ENCODE measurements at regions of chr6 and their contacts with region 1.

Region 1: DNA sequence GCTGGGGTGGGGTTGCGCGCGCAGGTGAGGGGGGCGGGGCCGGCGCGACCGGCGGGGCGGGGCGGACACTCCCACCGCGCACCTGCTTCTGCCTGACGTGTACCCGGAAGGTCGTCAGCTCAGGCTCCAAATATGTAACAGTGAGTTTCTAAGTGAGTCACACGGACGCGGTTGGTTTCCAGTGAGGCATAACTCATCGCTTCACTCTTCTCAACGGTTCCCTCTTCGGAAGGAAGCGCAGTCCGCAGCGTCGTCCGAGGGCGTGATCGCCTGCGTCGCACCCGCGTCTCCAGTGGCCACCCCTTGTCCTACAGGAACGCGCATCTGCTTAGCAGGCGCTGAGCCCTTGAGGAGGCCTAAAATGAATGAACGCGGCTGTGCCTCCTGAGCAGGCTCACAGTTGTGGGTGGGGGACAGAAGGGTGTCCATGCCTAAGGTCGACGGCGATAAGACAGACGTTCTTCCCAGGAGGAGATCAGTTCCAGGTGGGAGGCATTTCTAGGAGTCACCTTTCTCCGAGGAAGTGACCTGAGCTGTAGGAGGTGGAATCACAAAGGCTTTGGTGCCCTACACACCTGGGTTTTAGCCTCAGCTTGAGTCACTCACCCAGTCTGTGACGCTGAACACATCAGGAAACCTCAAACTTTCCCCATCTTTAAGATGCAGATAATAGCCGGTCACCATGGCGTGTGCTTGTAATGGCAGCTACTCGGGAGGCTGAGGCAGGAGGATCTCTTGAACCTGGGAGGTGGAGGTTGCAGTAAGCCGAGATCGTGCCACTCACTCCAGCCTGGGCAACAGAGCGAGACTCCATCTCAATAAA is 50.9 kb upstream of the EZR start:
- DNase-seq: peak; percentile 98
- ATAC-seq: peak; percentile 91
- H3K4me3 ChIP-seq: peak overlapping the region; percentile 62
- H3K27ac ChIP-seq: peak overlapping the region; percentile 91
- H3K4me1 ChIP-seq: peaks cover 39% of the 10 kb centered on the region
- H3K27me3 ChIP-seq: no peaks in the 10 kb centered on the region
- CTCF ChIP-seq: peak; percentile 10 to 43 (median 34); a peak in 4 of 6 replicates
- EP300 ChIP-seq: peak; percentile 96 to 97; a peak in 3 of 4 replicates
- POLR2A ChIP-seq: peak; percentile 98
- RAD21 ChIP-seq: peak; percentile 38

Region 2: GRCh38 chr6:158649289-158650143 is 220.5 kb before region 1 on chr6 and contains the start of gene SYTL3:
- CTCF ChIA-PET with region 1: interaction called, 3 read pairs
- POLR2A ChIA-PET with region 1: no interaction called
- RAD21 ChIA-PET with region 1: interaction called, 4 read pairs
- SMC1A ChIA-PET with region 1: interaction called, 4 read pairs
- in situ Hi-C with region 1: no loop called
- intact Hi-C with region 1: loop called (anchors 2 kb)
- DNase-seq: peak; percentile 95
- ATAC-seq: peak; percentile 71
- H3K4me3 ChIP-seq: peak within 1 kb of the TSS; percentile 45; the same call in 1 of the 2 replicates
- H3K27ac ChIP-seq: peak within 1 kb of the TSS; percentile 76
- H3K4me1 ChIP-seq: peaks cover 43% of the 10 kb centered on the region
- H3K27me3 ChIP-seq: no peaks in the 10 kb centered on the region
- CTCF ChIP-seq: no peak
- EP300 ChIP-seq: peak; percentile 31 to 85; a peak in 3 of 4 replicates
- POLR2A ChIP-seq: peak; percentile 55
- RAD21 ChIP-seq: no peak
- polyA plus RNA-seq, gene SYTL3: 3.3 to 4.2 TPM

Region 3: GRCh38 chr6:158793432-158793831 is 76.6 kb before region 1 on chr6:
- CTCF ChIA-PET with region 1: interaction called, 10 read pairs
- POLR2A ChIA-PET with region 1: interaction called, 6 read pairs
- RAD21 ChIA-PET with region 1: interaction called, 8 read pairs
- SMC1A ChIA-PET with region 1: interaction called, 9 read pairs
- in situ Hi-C with region 1: no loop called
- intact Hi-C with region 1: loop called (anchors 5 kb)
- DNase-seq: no peak
- ATAC-seq: peak; percentile 74
- H3K4me3 ChIP-seq: 0 out of 2 replicates have a peak overlapping the region, but pooled peaks have one; percentile 36
- H3K27ac ChIP-seq: no peak overlapping the region
- H3K4me1 ChIP-seq: peaks cover 65% of the 10 kb centered on the region
- H3K27me3 ChIP-seq: no peaks in the 10 kb centered on the region
- CTCF ChIP-seq: peak; percentile 62 to 69 (median 68)
- EP300 ChIP-seq: no peak
- POLR2A ChIP-seq: no peak
- RAD21 ChIP-seq: peak; percentile 82

Region 4: GRCh38 chr6:158819213-158819909 is 50.7 kb before region 1 on chr6 and contains the start of gene EZR:
- CTCF ChIA-PET with region 1: interaction called, 17 read pairs
- POLR2A ChIA-PET with region 1: interaction called, 11 read pairs
- RAD21 ChIA-PET with region 1: interaction called, 21 read pairs
- SMC1A ChIA-PET with region 1: interaction called, 52 read pairs
- in situ Hi-C with region 1: no loop called
- intact Hi-C with region 1: loop called (anchors 1 kb)
- DNase-seq: no peak
- ATAC-seq: peak; percentile 66
- H3K4me3 ChIP-seq: peak within 1 kb of the TSS; percentile 82
- H3K27ac ChIP-seq: peak within 1 kb of the TSS; percentile 66
- H3K4me1 ChIP-seq: peaks cover 14% of the 10 kb centered on the region
- H3K27me3 ChIP-seq: no peaks in the 10 kb centered on the region
- CTCF ChIP-seq: no peak; a peak in 1 of 6 replicates
- EP300 ChIP-seq: no peak
- POLR2A ChIP-seq: peak; percentile 93
- RAD21 ChIP-seq: 0 out of 2 replicates have a peak, but pooled peaks have one; percentile 8
- polyA plus RNA-seq, gene EZR: 79.1 to 98.6 TPM

Region 5: DNA sequence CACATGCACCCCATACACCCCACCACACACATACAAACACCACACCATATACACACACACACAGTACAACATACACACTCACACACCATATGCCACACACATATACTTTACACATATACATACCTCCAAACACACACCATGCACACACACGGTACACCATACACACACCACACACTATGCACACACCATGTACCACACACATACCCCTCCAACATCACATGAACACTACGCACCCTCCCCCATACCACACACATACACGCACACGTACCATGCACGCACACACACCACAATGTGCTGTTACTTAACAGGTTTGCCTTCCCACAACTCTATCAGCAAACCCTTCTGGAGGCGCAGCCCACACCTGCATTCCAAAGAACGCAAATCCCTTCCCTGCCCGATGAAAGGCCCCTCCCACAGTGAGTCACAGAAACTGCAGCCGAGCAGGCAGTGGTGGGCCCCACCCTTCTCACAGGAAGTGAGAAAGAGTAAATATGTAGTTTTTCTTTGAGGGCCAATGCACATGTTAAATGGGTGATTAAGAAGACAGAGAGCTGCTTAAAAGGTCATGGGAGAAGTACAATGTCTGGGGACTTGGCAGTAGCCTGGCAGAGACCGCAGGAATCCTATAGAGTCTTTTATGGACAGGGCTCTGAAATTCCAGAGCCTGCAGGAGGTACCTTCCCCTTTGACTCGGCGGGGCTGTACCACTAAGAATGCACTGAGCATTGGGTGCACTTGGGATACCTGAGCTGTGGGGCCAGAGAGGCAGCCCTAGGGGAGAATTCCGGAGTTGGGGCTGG is 16.8 kb before region 1 on chr6:
- CTCF ChIA-PET with region 1: interaction called, 13 read pairs
- POLR2A ChIA-PET with region 1: interaction called, 19 read pairs
- RAD21 ChIA-PET with region 1: interaction called, 21 read pairs
- SMC1A ChIA-PET with region 1: interaction called, 39 read pairs
- in situ Hi-C with region 1: no loop called
- intact Hi-C with region 1: no loop called
- DNase-seq: peak; percentile 50
- ATAC-seq: peak; percentile 94
- H3K4me3 ChIP-seq: peak overlapping the region; percentile 1; the same call in 1 of the 2 replicates
- H3K27ac ChIP-seq: peak overlapping the region; percentile 54
- H3K4me1 ChIP-seq: peaks cover 34% of the 10 kb centered on the region
- H3K27me3 ChIP-seq: no peaks in the 10 kb centered on the region
- CTCF ChIP-seq: no peak
- EP300 ChIP-seq: peak in 1 of 2 experiments; percentile 34; a peak in 1 of 4 replicates
- POLR2A ChIP-seq: no peak
- RAD21 ChIP-seq: peak; percentile 20; the same call in 1 of the 2 replicates

Region 6: GRCh38 chr6:158958504-158959386 is 88.7 kb after region 1 on chr6:
- CTCF ChIA-PET with region 1: interaction called, 4 read pairs
- POLR2A ChIA-PET with region 1: interaction called, 5 read pairs
- RAD21 ChIA-PET with region 1: interaction called, 5 read pairs
- SMC1A ChIA-PET with region 1: interaction called, 6 read pairs
- in situ Hi-C with region 1: no loop called
- intact Hi-C with region 1: loop called (anchors 5 kb)
- DNase-seq: no peak
- ATAC-seq: peak; percentile 86
- H3K4me3 ChIP-seq: no peak overlapping the region
- H3K27ac ChIP-seq: no peak overlapping the region
- H3K4me1 ChIP-seq: no peaks in the 10 kb centered on the region
- H3K27me3 ChIP-seq: no peaks in the 10 kb centered on the region
- CTCF ChIP-seq: peak; percentile 28 to 46 (median 36); a peak in 4 of 6 replicates
- EP300 ChIP-seq: no peak
- POLR2A ChIP-seq: no peak
- RAD21 ChIP-seq: peak; percentile 54

Measured in GM12878 (cell line).